ENCODE measurements at regions of chr2 and their contacts with region 1.

Region 1: GRCh38 chr2:172864182-172864581 is 128.5 kb downstream of the RAPGEF4 start:
- DNase-seq: peak in 4 of 5 donors; percentile 35 to 60 (median 51)
- ATAC-seq: peak; percentile 40 to 75 (median 63)
- H3K4me3 ChIP-seq: no peak overlapping the region
- H3K27ac ChIP-seq: no peak overlapping the region
- H3K4me1 ChIP-seq: peaks cover 3 to 49% (median 34%) of the 10 kb centered on the region in 12 donors
- H3K27me3 ChIP-seq: no peaks in the 10 kb centered on the region
- CTCF ChIP-seq: peak; percentile 39 to 78 (median 64)
- POLR2A ChIP-seq: no peak

Region 2: DNA sequence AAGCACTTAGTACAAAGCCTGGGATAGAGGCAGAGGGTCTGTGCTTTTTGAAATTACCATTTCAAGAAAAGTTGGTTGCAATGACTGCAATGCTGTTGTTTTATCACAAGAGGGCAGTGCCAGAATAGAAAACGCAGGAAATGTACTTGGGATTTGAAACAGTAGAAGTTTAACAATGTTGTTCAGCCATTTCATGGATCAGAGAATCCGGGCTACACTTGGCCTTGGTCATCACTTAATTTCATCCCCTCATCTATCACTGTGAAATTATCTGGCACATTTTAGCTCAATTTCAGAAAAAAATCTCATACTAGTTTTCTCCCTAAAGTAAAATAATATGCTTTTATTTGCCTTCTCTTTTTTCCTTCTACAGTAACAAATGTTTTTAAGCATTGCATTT is 57.7 kb before region 1 on chr2:
- intact Hi-C with region 1: loop called in 2 of 10 experiments (anchors 5 kb)
- DNase-seq: no peak
- ATAC-seq: peak in 2 of 4 donors; percentile 34 to 47
- H3K4me3 ChIP-seq: no peak overlapping the region
- H3K27ac ChIP-seq: no peak overlapping the region
- H3K4me1 ChIP-seq: peaks cover 0 to 6% (median 0%) of the 10 kb centered on the region in 12 donors
- H3K27me3 ChIP-seq: no peaks in the 10 kb centered on the region
- CTCF ChIP-seq: peak; percentile 77 to 94 (median 88)
- POLR2A ChIP-seq: no peak

Region 3: DNA sequence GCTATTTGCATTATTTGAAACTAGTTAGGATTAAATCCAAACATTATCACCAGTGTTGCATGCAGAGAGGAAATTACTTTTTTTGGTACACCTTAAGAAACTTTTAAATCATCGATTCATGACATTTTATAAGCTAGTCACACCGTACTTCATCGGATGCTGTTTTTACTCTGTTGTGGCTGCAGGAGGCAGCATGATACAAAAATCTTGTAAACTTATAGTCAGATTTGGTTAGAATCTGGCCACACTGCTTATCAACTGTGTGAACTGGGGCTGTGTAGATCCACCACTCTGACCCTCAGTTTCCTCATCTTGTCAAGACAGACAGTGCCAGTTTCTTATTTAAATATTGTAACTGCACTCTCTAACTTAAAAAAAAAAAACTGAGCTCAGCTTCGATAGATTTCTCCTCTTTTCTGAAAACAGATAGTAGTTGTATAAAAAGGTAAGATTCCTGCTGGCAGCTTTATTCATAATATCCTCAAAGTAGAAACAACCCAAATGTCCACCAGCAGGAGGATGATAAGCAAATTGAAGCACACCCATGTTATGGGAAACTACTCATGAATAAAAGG is 50.8 kb before region 1 on chr2:
- intact Hi-C with region 1: loop called in 4 of 10 experiments (anchors 2 to 5 kb)
- DNase-seq: no peak
- ATAC-seq: peak in 1 of 4 donors; percentile 78
- H3K4me3 ChIP-seq: no peak overlapping the region
- H3K27ac ChIP-seq: no peak overlapping the region
- H3K4me1 ChIP-seq: no peaks in the 10 kb centered on the region
- H3K27me3 ChIP-seq: peaks cover 0 to 4% (median 0%) of the 10 kb centered on the region in 9 donors
- CTCF ChIP-seq: peak; percentile 39 to 73 (median 58)
- POLR2A ChIP-seq: no peak

Region 4: DNA sequence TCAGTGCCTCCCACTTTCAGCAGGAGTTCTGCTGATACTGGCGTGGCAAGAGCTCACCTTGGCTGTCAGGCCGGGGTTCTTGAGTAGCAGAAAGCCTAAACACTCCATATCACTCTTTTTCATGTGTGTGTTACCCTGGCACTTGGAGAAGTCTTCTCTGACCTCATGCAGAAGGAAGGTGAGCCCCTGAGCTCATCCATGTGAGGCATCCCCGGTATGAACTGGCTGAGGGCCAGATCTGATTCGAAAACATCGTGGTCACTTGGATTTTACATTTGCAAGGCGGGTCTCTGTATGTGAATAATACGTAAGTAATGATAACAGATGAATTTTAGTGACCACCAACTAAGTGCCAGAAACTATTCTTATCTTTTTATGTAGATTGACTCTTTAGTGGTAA is 35.0 kb before region 1 on chr2:
- intact Hi-C with region 1: loop called in 1 of 10 experiments (anchors 5 kb)
- DNase-seq: no peak
- ATAC-seq: no peak
- H3K4me3 ChIP-seq: no peak overlapping the region
- H3K27ac ChIP-seq: no peak overlapping the region
- H3K4me1 ChIP-seq: peaks cover 0 to 14% (median 2%) of the 10 kb centered on the region in 12 donors
- H3K27me3 ChIP-seq: no peaks in the 10 kb centered on the region
- CTCF ChIP-seq: no peak
- POLR2A ChIP-seq: no peak

Region 5: GRCh38 chr2:172888714-172889669 is 24.8 kb after region 1 on chr2:
- intact Hi-C with region 1: no loop called
- DNase-seq: no peak
- ATAC-seq: peak in 1 of 4 donors; percentile 26
- H3K4me3 ChIP-seq: no peak overlapping the region
- H3K27ac ChIP-seq: peak overlapping the region in 7 of 12 donors; percentile 6 to 54 (median 41)
- H3K4me1 ChIP-seq: peaks cover 0 to 29% (median 20%) of the 10 kb centered on the region in 12 donors
- H3K27me3 ChIP-seq: no peaks in the 10 kb centered on the region
- CTCF ChIP-seq: no peak
- POLR2A ChIP-seq: no peak

Measured in heart left ventricle (tissue), 16 donors.